ENCODE measurements at regions of chr14 and their contacts with region 1.

Region 1: DNA sequence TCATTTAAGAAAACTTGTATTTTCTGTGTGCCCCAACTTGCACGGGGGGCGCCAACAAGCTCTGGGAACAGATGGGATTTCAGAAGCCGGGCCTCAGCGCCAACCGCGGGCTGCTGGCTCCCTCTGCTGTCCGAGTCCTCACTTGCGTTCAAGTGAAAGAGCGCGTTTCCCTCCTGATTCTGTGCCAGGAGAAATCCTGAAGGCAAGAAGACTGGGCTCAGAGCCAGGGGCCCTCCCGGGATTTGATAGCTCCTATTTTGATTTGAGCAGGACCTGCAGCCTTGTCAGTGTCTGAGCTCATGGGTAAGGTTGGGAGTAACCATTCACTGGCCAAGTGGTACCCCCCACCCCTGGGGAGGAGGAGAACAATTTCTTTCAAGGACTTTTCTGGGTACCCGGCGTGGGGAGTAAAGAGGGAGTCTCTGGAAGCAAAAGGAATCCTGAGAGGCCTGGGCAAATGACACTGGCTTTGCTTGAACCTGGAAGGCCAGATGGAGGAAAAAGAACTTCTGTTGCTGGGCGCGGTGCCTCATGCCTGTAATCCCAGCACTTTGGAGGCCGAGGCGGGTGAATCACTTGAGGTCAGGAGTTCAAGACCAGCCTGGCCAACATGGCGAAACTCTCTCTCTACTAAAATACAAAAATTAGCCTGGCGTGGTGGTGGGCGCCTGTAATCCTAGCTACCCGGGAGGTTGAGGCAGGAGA is 179.0 kb upstream of the RGS6 start:
- DNase-seq: peak; percentile 97
- H3K4me3 ChIP-seq: peak overlapping the region; percentile 18
- H3K27ac ChIP-seq: peak overlapping the region; percentile 2
- H3K4me1 ChIP-seq: peaks cover 3% of the 10 kb centered on the region
- H3K27me3 ChIP-seq: no peaks in the 10 kb centered on the region
- CTCF ChIP-seq: peak; percentile 98

Region 2: DNA sequence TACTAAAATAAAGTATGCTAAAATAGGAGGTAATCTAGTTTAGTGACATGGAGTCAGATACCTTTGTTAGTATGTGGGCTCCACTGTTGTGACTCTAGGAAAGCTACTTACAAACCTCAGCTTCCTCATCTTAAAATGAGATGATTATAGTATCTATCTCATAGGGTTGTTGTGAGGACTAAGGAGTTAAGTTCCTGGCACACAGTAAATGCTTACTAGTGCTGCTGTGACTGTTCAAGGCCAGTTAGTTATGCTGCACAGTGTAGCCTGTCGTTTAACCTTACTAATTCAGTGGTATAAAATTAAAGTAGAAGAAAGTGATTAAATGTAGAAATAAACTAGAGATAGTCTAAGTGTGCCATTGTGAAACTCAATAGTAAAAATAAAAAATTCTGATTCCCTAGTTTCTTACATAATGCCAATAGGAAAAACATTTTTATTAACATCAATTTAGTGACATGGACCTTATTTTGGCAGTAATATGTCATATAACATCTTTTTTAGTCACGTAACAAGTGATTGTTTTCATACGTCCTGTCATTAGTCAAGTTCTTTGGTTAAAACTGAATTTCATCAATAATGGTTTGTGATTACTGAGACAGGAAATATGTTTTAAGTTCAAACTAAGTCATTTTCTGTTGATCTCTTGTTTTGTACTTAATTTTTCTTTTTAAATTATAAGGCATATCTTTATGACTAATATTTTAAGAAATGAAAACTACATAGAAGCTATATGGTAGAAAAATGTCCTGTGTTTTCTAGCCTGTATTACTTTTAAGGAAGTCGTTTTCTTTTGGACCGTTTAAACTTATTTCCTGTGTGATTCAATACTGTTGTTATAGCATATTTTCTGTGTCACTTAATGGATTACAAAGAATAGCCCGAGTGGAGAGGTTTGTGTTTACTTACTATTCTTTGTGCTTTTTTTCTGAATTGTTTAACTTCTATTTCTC is 772.0 kb before region 1 on chr14:
- CTCF ChIA-PET with region 1: no interaction called
- POLR2A ChIA-PET with region 1: no interaction called
- intact Hi-C with region 1: loop called (anchors 10 kb)
- DNase-seq: peak; percentile 49
- H3K4me3 ChIP-seq: no peak overlapping the region
- H3K27ac ChIP-seq: peak overlapping the region; percentile 24
- H3K4me1 ChIP-seq: peaks cover 31% of the 10 kb centered on the region
- H3K27me3 ChIP-seq: no peaks in the 10 kb centered on the region
- CTCF ChIP-seq: no peak

Region 3: GRCh38 chr14:71138448-71139293 is 614.6 kb before region 1 on chr14:
- CTCF ChIA-PET with region 1: interaction called, 16 read pairs
- POLR2A ChIA-PET with region 1: no interaction called
- intact Hi-C with region 1: loop called (anchors 2 kb)
- DNase-seq: peak; percentile 72
- H3K4me3 ChIP-seq: no peak overlapping the region
- H3K27ac ChIP-seq: no peak overlapping the region
- H3K4me1 ChIP-seq: peaks cover 10% of the 10 kb centered on the region
- H3K27me3 ChIP-seq: no peaks in the 10 kb centered on the region
- CTCF ChIP-seq: peak; percentile 97

Region 4: GRCh38 chr14:71166180-71166790 is 587.0 kb before region 1 on chr14:
- CTCF ChIA-PET with region 1: interaction called, 4 read pairs
- POLR2A ChIA-PET with region 1: no interaction called
- intact Hi-C with region 1: loop called (anchors 1 kb)
- DNase-seq: peak; percentile 83
- H3K4me3 ChIP-seq: no peak overlapping the region
- H3K27ac ChIP-seq: no peak overlapping the region
- H3K4me1 ChIP-seq: peaks cover 26% of the 10 kb centered on the region
- H3K27me3 ChIP-seq: no peaks in the 10 kb centered on the region
- CTCF ChIP-seq: peak; percentile 88

Region 5: DNA sequence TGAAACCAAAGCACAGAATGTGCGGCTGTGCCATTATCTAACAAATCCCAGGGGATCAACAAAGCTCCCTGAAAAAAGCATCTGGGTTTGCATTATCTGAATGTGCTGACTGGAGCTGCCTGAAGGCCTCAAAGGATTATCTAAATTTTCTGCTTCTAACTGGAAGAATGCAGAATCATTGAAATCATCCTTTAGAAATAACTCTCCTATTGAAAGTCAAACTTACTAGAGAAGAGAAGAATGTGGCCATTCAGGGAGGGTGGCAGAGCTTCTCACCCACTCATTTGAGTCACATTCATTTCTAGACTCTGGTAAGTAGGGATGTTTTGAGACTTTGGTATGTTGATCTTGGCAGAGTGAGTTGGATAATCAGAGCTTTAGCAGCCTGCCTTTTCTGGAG is 41.7 kb before region 1 on chr14:
- CTCF ChIA-PET with region 1: no interaction called
- POLR2A ChIA-PET with region 1: no interaction called
- intact Hi-C with region 1: loop called (anchors 5 kb)
- DNase-seq: peak; percentile 92
- H3K4me3 ChIP-seq: no peak overlapping the region
- H3K27ac ChIP-seq: peak overlapping the region; percentile 87
- H3K4me1 ChIP-seq: peaks cover 41% of the 10 kb centered on the region
- H3K27me3 ChIP-seq: no peaks in the 10 kb centered on the region
- CTCF ChIP-seq: no peak

Region 6: GRCh38 chr14:71720978-71721624 is 32.2 kb before region 1 on chr14:
- CTCF ChIA-PET with region 1: interaction called, 5 read pairs
- POLR2A ChIA-PET with region 1: no interaction called
- intact Hi-C with region 1: loop called (anchors 2 kb)
- DNase-seq: peak; percentile 86
- H3K4me3 ChIP-seq: no peak overlapping the region
- H3K27ac ChIP-seq: no peak overlapping the region
- H3K4me1 ChIP-seq: peaks cover 26% of the 10 kb centered on the region
- H3K27me3 ChIP-seq: no peaks in the 10 kb centered on the region
- CTCF ChIP-seq: peak; percentile 78

Region 7: DNA sequence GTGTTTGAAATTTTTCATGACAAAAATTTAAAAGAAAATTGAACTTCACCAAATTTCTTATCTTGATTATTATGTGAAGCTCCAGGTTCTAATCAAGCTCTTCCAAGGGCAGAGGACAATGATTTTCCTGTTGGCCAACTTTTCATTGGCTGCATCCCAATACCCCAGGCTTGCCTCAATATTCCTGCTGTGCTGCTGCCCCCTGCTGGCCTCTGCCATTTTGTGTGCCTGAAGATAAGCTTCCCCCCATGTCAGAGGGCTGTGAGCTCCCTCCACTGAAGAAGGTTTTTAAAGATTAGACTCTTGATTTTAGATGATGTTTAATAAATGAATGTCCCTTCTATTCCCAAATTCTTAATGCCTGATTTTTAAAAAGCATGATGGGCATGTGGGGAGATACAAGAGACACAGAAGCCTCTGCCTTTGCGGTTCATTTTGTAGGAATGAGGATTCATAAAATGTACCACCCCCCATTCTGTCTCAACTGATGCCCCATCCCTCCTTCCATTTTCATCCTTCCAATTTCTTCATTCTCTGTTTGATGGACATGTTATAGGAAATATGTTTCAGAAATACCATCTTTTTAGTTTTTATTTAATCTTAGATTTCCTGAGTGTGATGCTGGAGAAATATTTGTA is 102.2 kb after region 1 on chr14:
- CTCF ChIA-PET with region 1: interaction called, 14 read pairs
- POLR2A ChIA-PET with region 1: no interaction called
- intact Hi-C with region 1: loop called (anchors 1 kb)
- DNase-seq: peak; percentile 88
- H3K4me3 ChIP-seq: no peak overlapping the region
- H3K27ac ChIP-seq: no peak overlapping the region
- H3K4me1 ChIP-seq: peaks cover 16% of the 10 kb centered on the region
- H3K27me3 ChIP-seq: no peaks in the 10 kb centered on the region
- CTCF ChIP-seq: peak; percentile 94